ENCODE measurements at regions of chr11 and their contacts with region 1.

Region 1: DNA sequence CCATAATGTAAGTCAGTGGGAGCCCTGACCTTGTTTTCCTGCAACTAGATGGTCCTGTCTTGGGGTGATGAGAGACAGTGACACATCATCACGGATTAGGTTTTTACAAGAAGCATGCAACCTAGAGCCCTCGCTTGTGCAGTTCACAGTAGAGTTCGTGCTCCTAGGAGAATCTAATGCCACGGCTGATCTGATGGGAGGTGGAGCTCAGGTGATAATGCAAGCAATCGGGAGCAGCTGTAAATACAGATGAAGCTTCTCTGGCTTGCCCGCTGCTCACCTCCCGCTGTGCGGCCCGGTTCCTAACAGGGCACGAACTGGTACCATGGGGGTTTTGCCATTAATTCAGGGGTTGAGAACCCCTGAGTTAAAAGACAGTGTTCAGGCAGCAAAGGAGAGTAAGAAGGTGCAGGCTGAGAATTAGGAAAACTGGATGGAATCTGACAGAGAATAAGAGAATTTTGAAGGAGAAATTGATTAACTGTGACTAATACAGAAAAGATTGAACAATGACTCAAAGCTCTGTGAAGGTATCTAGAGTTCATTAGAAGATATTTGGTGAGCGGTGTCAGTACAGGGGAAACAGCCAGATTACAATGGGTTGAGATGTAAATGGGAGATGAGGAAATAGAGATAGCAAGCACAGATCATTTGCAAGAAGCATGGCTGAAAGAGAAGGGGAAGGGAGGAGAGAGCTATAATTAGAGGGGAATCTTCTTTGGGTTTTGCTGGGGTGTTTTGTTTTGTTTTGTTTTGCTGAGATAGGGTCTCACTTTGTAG is 21.0 kb downstream of the WEE1 start:
- DNase-seq: no peak
- ATAC-seq: no peak; a peak in 2 of 6 replicates
- H3K4me3 ChIP-seq: no peak overlapping the region
- H3K27ac ChIP-seq: no peak overlapping the region
- H3K4me1 ChIP-seq: no peaks in the 10 kb centered on the region
- CTCF ChIP-seq: no peak
- EP300 ChIP-seq: no peak
- POLR2A ChIP-seq: no peak
- RAD21 ChIP-seq: no peak

Region 2: GRCh38 chr11:9606809-9607510 is 12.5 kb after region 1 on chr11:
- CTCF ChIA-PET with region 1: interaction called, 10 read pairs
- POLR2A ChIA-PET with region 1: no interaction called
- DNase-seq: peak in 1 of 2 experiments; percentile 70
- ATAC-seq: peak; percentile 94 to 95
- H3K4me3 ChIP-seq: no peak overlapping the region
- H3K27ac ChIP-seq: peak overlapping the region in 1 of 2 experiments; percentile 75; a peak in 4 of 6 replicates
- H3K4me1 ChIP-seq: peaks cover 20% of the 10 kb centered on the region
- CTCF ChIP-seq: peak; percentile 38
- EP300 ChIP-seq: no peak
- POLR2A ChIP-seq: no peak
- RAD21 ChIP-seq: peak; percentile 53 to 66; a peak in 4 of 5 replicates